ENCODE measurements at regions of chr11 and their contacts with region 1.

Region 1: DNA sequence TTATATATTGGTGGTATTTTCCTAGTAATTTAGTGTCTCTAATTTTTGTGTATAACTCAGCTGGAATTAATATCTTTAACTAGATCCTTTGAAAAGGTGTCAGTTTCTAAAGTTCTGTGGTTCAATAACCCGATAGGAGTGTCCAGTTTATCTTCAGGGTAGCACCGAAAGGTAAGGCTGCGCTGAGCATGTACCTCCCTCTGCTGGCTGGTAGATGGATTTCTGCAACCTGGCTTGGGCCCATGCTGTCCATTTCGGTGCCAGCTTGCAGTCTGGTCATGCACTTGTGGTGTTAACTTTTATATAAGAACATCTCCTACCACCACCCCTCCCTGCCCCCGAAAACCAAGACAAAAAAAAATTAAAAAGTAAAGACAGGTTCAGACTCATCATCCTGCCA is 24.7 kb downstream of the EXT2 start:
- DNase-seq: no peak

Region 2: GRCh38 chr11:44104481-44105294 is 15.5 kb before region 1 on chr11:
- intact Hi-C with region 1: loop called in 1 of 2 experiments (anchors 1 kb)
- DNase-seq: no peak

Region 3: GRCh38 chr11:44600839-44601383 is 480.7 kb after region 1 on chr11:
- intact Hi-C with region 1: no loop called
- DNase-seq: no peak

Measured in posterior vena cava (tissue), 2 donors.